ENCODE measurements at regions of chr1 and their contacts with region 1.

Region 1: DNA sequence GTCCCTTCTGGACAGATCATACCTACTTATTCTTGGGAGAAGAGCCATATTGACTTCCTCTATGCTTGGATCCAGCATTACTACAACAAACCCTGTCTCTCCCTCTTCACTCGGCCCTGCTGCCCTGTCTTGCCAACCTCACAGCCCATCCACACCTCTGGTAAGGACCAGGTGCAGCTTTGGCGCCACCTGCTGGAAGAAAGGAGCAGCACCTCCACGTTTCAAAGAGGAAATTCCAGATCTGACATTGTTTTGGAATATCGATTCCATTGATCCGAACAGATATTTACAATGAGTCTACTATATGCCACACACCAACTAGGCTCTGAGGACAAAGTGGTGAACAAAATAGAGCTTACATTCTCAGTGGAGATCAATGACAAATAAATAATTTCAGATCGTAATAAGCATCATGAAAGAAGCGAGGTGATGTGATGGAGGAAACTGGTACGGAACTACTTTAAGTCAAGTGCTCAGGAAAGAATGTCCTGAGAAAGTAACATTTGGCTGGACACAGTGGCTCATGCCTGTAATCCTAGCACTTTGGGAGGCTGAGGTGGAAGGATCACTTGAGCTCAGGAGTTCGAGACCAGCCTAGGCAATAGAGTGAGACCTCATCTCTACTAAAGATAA is 18.7 kb downstream of the MFSD2A start:
- DNase-seq: peak; percentile 90

Region 2: GRCh38 chr1:39238476-39238875 is 735.1 kb before region 1 on chr1:
- intact Hi-C with region 1: no loop called
- DNase-seq: no peak

Region 3: DNA sequence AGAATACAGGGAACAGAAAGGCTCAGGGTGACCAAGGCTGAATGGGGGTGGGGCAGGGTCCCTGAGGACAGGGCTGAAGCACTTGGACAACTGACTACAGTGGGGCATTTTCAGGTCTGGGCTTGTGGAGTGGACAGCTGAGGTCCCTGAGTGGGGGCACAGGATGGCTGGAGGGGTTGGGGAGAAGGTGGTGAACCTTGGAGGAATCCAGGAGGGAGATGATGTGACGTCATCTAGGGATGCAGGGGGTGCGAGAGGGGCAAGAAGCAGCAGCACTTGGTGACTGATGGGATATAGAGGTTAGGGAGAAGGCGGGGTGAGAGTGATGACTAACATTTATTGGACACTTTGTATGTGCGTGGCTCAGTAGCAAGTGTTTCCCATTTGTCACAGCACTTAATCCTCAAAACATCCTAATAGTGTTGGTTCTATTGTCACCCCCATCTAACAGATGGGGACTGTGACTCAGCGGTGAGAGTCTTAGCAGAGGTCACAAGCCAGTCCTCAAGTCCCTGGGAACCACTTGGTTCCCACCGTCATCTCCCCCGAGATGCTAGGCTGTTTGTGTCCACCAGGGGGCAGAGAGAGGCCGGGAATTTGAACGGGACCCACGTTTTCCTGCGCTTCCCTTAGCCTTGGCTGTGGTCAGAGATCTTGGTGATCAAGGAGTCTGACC is 157.1 kb before region 1 on chr1:
- intact Hi-C with region 1: loop called (anchors 1 kb)
- DNase-seq: no peak

Region 4: GRCh38 chr1:39919545-39919944 is 54.1 kb before region 1 on chr1:
- intact Hi-C with region 1: loop called (anchors 2 kb)
- DNase-seq: no peak

Region 5: DNA sequence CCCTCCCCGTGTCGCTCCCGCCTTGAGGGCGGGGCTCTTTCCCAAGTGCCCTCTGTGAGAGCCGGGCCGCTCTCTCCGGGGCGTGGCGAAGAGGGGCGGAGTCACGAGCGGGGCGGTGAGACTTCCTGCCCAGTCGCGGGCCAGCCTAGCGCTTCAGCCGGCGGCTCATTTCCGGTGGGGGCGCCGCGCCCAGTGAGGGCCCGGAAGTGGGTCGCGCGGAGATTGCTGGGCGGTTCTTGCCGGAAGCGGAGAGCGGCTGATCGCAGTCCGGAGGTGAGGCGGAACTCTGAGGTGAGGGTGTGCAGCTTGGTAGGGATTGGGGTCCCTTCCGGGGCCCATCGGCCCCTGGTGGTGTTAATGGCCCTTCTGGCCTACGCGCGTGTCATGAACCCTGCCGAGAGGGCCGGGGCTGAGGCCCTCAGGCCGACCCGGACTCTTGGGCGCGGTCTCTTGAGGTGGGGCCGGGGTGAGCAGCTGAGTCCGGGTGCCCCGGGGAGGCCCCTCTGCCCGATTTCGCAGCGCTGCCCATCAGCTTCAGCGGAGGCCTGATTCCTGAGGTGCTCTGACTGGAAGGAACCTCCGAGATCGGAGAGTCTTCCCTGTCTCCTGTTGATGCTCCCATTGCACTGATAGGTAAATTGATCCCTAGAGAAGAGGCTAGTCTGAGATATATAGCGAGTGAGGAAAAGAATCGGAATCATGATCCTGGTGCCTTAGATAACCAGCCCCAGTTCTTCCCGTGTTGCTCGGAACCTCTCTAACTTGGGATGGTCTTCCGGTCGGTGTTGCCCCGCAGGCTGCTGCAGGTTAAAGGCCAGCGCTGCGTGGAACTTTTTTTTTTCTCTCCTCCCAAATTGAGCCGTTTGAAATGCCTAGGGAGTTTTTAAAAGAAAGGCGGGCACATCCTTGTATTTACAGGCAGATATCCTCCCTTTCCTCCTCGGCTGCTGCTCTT is 67.2 kb after region 1 on chr1 and contains the start of gene CAP1:
- intact Hi-C with region 1: loop called (anchors 10 kb)
- DNase-seq: peak; percentile 100
- total RNA-seq, gene CAP1: 82.8 TPM